ENCODE measurements at regions of chr2 and their contacts with region 1.

Region 1: GRCh38 chr2:29309090-29310029 is 194.1 kb downstream of the CLIP4 start:
- H3K4me3 Mint-ChIP-seq: no peak overlapping the region
- H3K27ac Mint-ChIP-seq: no peak overlapping the region
- H3K4me1 Mint-ChIP-seq: peaks cover 22% of the 10 kb centered on the region
- H3K27me3 Mint-ChIP-seq: peaks cover 35% of the 10 kb centered on the region

Region 2: DNA sequence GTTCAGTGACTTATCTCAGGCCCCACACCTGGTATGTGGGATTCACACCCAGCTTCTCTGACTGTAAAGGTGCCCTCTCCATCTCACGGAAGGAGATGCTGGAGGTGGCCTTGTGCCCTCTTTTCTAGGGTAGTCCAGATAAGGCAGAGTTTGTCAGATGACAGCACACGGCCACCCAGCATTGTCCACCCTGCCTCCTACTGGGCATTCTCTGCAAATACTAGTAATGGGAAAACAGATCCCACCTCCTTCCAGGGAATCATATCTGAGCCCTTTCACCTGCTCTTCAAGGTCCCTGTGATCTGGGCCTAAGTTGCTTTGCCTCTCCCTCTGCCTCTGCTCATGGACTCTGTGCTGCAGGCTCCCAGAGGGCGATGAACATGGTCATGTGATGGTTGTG is 20.5 kb after region 1 on chr2:
- intact Hi-C with region 1: loop called (anchors 1 kb)
- H3K4me3 Mint-ChIP-seq: no peak overlapping the region
- H3K27ac Mint-ChIP-seq: no peak overlapping the region
- H3K4me1 Mint-ChIP-seq: no peaks in the 10 kb centered on the region
- H3K27me3 Mint-ChIP-seq: peaks cover 10% of the 10 kb centered on the region

Region 3: GRCh38 chr2:29841386-29842004 is 532.1 kb after region 1 on chr2:
- intact Hi-C with region 1: loop called (anchors 1 kb)
- H3K4me3 Mint-ChIP-seq: no peak overlapping the region
- H3K27ac Mint-ChIP-seq: no peak overlapping the region
- H3K4me1 Mint-ChIP-seq: no peaks in the 10 kb centered on the region
- H3K27me3 Mint-ChIP-seq: peaks cover 4% of the 10 kb centered on the region